Activated naive CD4-positive, alpha-beta T cell treated with anti-CD3 and anti-CD28 coated beads for 36 hours (primary cell): ENCODE measurements at regions of chr2 and their contacts with region 1.

Region 1: DNA sequence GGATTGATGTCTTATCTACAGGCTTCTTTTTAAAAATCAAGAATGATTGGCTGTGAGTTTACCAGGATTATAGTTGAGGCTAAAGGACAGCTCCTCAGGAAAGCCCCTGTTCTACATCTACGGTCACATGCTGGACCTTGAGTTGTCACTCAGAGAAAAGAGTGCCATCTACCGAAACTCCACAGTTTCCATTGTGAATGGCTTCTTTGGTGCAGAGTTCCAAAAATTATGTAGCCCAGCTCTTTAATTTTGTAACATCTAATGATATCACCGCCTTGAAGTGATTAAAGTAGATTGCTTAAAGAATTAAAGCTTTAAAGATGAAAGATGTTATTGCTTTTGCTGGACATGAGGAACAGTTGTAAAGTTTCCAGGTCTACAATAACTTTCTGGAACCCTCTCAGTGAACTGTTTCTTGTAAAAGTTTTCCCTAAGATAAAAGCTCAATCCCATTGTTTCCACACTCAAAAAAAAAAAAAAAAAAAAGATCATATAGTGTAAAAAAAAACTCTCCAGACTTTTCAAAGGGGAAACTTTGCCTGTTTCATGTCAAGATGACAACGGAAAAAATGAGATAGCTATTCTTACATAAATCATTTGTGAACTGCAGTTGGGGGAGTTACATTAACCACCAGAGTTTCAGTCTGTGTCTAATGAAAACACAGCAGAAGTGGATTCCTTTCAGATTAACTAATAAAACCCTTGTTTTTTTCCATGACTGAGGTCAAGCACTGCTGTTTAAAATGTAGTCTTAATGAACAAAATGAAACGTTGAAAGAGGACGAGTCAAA is 4.3 kb downstream of the COL3A1 start:
- DNase-seq: peak; percentile 6
- H3K4me3 Mint-ChIP-seq: peak overlapping the region; percentile 7
- H3K27ac Mint-ChIP-seq: peak overlapping the region; percentile 51
- H3K4me1 Mint-ChIP-seq: peaks cover 19% of the 10 kb centered on the region
- H3K27me3 Mint-ChIP-seq: peaks cover 19% of the 10 kb centered on the region

Region 2: GRCh38 chr2:188944442-188944841 is 34.0 kb before region 1 on chr2:
- CTCF ChIA-PET with region 1: no interaction called
- intact Hi-C with region 1: no loop called
- DNase-seq: no peak
- H3K4me3 Mint-ChIP-seq: no peak overlapping the region
- H3K27ac Mint-ChIP-seq: no peak overlapping the region
- H3K4me1 Mint-ChIP-seq: no peaks in the 10 kb centered on the region
- H3K27me3 Mint-ChIP-seq: no peaks in the 10 kb centered on the region

Region 3: DNA sequence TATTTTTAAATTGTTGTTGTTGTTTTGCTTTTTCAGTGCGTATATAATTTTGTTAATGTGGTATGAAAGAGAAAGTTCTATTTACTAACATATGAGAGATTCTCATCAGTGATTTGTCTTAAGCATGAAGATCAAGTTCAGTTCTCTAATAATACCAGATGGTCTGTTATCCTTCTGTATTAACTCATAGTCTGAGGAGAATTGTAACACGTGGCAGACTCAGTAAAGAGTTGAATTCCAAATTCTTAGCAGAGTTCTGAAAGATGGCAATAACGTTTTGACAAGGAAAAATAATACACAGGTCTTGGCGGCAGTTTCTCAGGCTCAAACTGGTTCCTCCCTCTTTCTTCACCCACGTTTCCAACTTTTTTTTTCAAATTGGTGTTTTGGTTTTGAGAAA is 21.5 kb before region 1 on chr2:
- CTCF ChIA-PET with region 1: interaction called, 3 read pairs
- intact Hi-C with region 1: loop called (anchors 1 kb)
- DNase-seq: no peak
- H3K4me3 Mint-ChIP-seq: no peak overlapping the region
- H3K27ac Mint-ChIP-seq: no peak overlapping the region
- H3K4me1 Mint-ChIP-seq: peaks cover 9% of the 10 kb centered on the region
- H3K27me3 Mint-ChIP-seq: peaks cover 13% of the 10 kb centered on the region

Region 4: GRCh38 chr2:189210250-189211075 is 232.0 kb after region 1 on chr2:
- CTCF ChIA-PET with region 1: no interaction called
- intact Hi-C with region 1: loop called (anchors 1 kb)
- DNase-seq: peak; percentile 23
- H3K4me3 Mint-ChIP-seq: no peak overlapping the region
- H3K27ac Mint-ChIP-seq: no peak overlapping the region
- H3K4me1 Mint-ChIP-seq: peaks cover 19% of the 10 kb centered on the region
- H3K27me3 Mint-ChIP-seq: no peaks in the 10 kb centered on the region

Region 5: GRCh38 chr2:189347540-189347939 is 369.1 kb after region 1 on chr2:
- CTCF ChIA-PET with region 1: no interaction called
- intact Hi-C with region 1: loop called (anchors 5 kb)
- DNase-seq: peak; percentile 28
- H3K4me3 Mint-ChIP-seq: no peak overlapping the region
- H3K27ac Mint-ChIP-seq: no peak overlapping the region
- H3K4me1 Mint-ChIP-seq: peaks cover 17% of the 10 kb centered on the region
- H3K27me3 Mint-ChIP-seq: no peaks in the 10 kb centered on the region